CD8-positive, alpha-beta T cell (primary cell): ENCODE measurements at regions of chr6 and their contacts with region 1.

Region 1: GRCh38 chr6:99330159-99330558 is 19.3 kb downstream of the FAXC start:
- DNase-seq: peak; percentile 12 to 72 (median 42)
- ATAC-seq: peak; percentile 64
- H3K4me3 ChIP-seq: no peak overlapping the region
- H3K4me3 Mint-ChIP-seq: no peak overlapping the region
- H3K27ac ChIP-seq: no peak overlapping the region
- H3K27ac Mint-ChIP-seq: no peak overlapping the region
- H3K4me1 ChIP-seq: no peaks in the 10 kb centered on the region
- H3K4me1 Mint-ChIP-seq: peaks cover 2% of the 10 kb centered on the region
- H3K27me3 ChIP-seq: no peaks in the 10 kb centered on the region
- H3K27me3 Mint-ChIP-seq: no peaks in the 10 kb centered on the region
- CTCF ChIP-seq: peak; percentile 85

Region 2: DNA sequence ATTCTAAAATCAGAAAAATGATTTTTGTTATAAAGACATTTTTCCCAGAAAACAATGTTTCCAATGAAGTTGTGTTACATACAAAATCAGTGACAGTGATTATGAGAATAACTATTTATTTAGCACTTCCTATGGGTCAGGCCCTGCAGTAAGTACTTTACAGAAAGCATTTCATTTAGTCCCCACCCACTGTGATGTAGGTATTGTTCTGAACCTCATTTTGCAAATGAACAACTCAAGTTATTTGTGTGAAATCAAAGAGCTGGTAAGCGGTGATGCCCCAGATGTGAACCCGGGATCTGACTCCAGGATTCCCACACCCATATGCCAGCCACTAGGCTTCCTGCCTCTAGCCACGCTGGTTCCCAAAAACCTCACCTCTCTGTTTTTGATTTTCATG is 11.6 kb before region 1 on chr6:
- CTCF ChIA-PET with region 1: interaction called, 22 read pairs
- POLR2A ChIA-PET with region 1: interaction called, 3 read pairs
- intact Hi-C with region 1: no loop called
- DNase-seq: no peak
- ATAC-seq: no peak
- H3K4me3 ChIP-seq: no peak overlapping the region
- H3K4me3 Mint-ChIP-seq: no peak overlapping the region
- H3K27ac ChIP-seq: no peak overlapping the region
- H3K27ac Mint-ChIP-seq: no peak overlapping the region
- H3K4me1 ChIP-seq: no peaks in the 10 kb centered on the region
- H3K4me1 Mint-ChIP-seq: no peaks in the 10 kb centered on the region
- H3K27me3 ChIP-seq: no peaks in the 10 kb centered on the region
- H3K27me3 Mint-ChIP-seq: peaks cover 25% of the 10 kb centered on the region
- CTCF ChIP-seq: no peak

Region 3: GRCh38 chr6:99344289-99344688 is 14.1 kb after region 1 on chr6:
- CTCF ChIA-PET with region 1: interaction called, 16 read pairs
- POLR2A ChIA-PET with region 1: no interaction called
- intact Hi-C with region 1: no loop called
- DNase-seq: no peak
- ATAC-seq: no peak
- H3K4me3 ChIP-seq: no peak overlapping the region
- H3K4me3 Mint-ChIP-seq: no peak overlapping the region
- H3K27ac ChIP-seq: no peak overlapping the region
- H3K27ac Mint-ChIP-seq: no peak overlapping the region
- H3K4me1 ChIP-seq: no peaks in the 10 kb centered on the region
- H3K4me1 Mint-ChIP-seq: peaks cover 2% of the 10 kb centered on the region
- H3K27me3 ChIP-seq: peaks cover 0 to 5% of the 10 kb centered on the region in 2 experiments
- H3K27me3 Mint-ChIP-seq: peaks cover 29% of the 10 kb centered on the region
- CTCF ChIP-seq: no peak

Region 4: DNA sequence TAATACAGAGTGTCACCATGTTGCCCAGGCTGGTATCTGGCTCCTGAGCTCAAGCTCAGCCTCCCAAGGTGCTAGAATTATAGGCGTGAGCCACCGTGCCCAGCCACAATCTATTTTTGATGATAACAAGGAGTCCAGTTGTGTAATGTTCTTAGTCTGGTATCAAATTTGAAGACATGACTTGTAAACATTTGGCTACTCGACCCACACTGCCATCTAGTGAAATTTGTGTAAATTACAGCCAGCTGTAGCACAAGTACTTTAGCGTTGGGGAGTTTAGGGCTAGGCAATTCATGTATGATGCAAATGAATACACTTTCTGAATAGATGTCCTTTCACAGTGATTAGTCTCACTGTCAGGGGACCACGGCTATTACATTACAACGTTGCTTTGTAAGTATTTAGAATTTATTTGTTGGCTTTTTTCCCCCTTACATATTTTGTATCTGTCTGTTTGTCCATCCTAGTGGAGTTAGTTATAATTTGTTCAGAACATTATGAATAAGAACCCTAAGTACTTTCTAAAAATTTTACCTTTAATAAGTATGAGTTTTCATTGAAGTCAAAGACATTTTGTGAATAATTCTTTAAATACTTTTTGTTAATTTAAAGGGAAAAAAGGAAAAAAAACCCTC is 416.2 kb after region 1 on chr6:
- CTCF ChIA-PET with region 1: interaction called, 7 read pairs
- POLR2A ChIA-PET with region 1: no interaction called
- intact Hi-C with region 1: loop called (anchors 5 kb)
- DNase-seq: peak; percentile 19 to 77 (median 49)
- ATAC-seq: peak; percentile 82
- H3K4me3 ChIP-seq: no peak overlapping the region
- H3K4me3 Mint-ChIP-seq: no peak overlapping the region
- H3K27ac ChIP-seq: no peak overlapping the region
- H3K27ac Mint-ChIP-seq: no peak overlapping the region
- H3K4me1 ChIP-seq: no peaks in the 10 kb centered on the region
- H3K4me1 Mint-ChIP-seq: no peaks in the 10 kb centered on the region
- H3K27me3 ChIP-seq: peaks cover 0 to 4% of the 10 kb centered on the region in 2 experiments
- H3K27me3 Mint-ChIP-seq: peaks cover 27% of the 10 kb centered on the region
- CTCF ChIP-seq: peak; percentile 85

Region 5: GRCh38 chr6:99822741-99823512 is 492.8 kb after region 1 on chr6:
- CTCF ChIA-PET with region 1: no interaction called
- POLR2A ChIA-PET with region 1: no interaction called
- intact Hi-C with region 1: loop called in 1 of 2 experiments (anchors 10 kb)
- DNase-seq: peak in 2 of 9 experiments; percentile 43 to 53
- ATAC-seq: peak; percentile 34
- H3K4me3 ChIP-seq: no peak overlapping the region
- H3K4me3 Mint-ChIP-seq: peak overlapping the region; percentile 50
- H3K27ac ChIP-seq: no peak overlapping the region
- H3K27ac Mint-ChIP-seq: no peak overlapping the region
- H3K4me1 ChIP-seq: no peaks in the 10 kb centered on the region
- H3K4me1 Mint-ChIP-seq: peaks cover 7% of the 10 kb centered on the region
- H3K27me3 ChIP-seq: peaks cover 4% of the 10 kb centered on the region in 2 experiments
- H3K27me3 Mint-ChIP-seq: peaks cover 31% of the 10 kb centered on the region
- CTCF ChIP-seq: no peak

Region 6: DNA sequence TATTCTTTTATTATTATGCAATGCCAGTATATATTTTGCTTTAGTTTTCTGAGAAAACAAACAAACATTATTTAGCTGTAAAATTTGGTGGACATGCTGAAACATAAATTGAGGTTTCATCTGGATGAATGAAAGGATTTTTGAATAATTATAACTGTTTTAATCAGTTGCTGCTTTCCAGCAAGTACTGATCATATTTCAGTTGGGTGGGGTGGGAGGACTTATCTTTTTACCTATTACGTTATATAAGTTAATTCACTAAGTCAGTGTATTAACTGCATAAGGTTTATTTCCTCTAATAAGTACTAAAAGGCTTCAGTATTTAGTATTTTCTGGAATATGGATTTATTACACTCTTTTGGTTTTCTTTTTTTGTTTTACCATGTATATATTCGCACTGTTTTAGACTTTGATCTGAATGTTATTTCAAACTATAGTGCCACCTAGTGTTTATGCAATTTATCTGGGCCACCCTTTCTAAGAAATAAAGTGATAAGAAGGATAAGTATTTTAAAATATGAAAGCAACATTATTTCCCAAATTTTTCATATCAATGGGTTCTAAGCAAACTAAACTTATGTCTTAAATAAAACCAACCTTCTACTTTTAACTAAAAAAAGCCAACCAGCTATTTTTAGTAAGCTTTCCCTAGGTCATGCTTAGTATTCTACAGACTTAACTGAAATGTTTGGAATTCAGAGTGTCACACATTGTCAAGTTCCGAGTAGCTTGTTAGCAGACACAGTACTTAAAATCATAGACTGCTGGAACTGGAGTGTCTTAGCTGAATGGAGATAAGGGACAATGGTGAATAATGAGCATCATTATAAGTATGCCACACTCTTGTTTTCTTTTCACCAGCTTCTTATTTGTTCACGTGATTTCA is 769.3 kb after region 1 on chr6:
- CTCF ChIA-PET with region 1: no interaction called
- POLR2A ChIA-PET with region 1: no interaction called
- intact Hi-C with region 1: loop called in 1 of 2 experiments (anchors 10 kb)
- DNase-seq: peak in 1 of 9 experiments; percentile 17
- ATAC-seq: no peak
- H3K4me3 ChIP-seq: no peak overlapping the region
- H3K4me3 Mint-ChIP-seq: no peak overlapping the region
- H3K27ac ChIP-seq: no peak overlapping the region
- H3K27ac Mint-ChIP-seq: no peak overlapping the region
- H3K4me1 ChIP-seq: no peaks in the 10 kb centered on the region
- H3K4me1 Mint-ChIP-seq: no peaks in the 10 kb centered on the region
- H3K27me3 ChIP-seq: no peaks in the 10 kb centered on the region
- H3K27me3 Mint-ChIP-seq: peaks cover 4% of the 10 kb centered on the region
- CTCF ChIP-seq: peak; percentile 12

Region 7: DNA sequence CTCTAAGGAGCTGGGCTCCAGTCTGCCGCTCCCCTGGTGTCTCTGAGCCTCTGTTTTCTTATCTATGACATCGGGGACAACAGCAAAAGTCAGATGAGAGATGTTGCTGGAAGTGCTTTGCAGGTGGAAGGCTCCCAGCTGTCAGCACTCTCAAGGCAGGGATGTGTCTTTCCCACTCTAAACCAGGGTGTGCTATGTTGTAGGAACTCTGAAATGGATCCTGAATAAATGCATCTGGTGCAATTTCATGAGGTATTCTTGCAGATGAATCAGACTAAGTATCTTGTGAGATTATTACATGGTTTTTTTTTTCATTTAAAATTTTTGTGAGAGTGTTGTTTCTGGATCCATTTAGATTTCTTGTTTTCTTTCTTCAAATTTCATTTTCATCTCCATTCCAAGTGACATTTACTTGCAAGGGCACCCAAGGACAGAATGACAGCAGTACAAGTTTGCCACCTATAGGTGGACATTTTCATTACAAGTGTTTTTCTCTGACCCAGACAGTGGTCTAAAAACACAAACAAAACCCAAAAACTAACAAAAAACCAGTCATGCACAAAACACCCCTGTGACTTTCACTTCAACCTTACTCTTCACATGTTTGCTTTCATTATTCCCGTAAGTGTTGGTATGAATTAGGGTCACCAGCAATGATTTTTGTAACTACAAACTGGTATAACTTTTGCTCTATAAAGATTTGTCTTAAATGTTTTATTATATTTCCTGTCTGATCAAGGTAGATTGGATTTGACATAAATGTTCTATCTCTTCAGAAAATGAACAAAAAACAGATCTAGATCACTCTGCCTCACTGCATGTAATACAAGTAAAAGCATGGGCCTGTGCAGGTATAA is 1149.2 kb after region 1 on chr6:
- CTCF ChIA-PET with region 1: no interaction called
- POLR2A ChIA-PET with region 1: no interaction called
- intact Hi-C with region 1: loop called in 1 of 2 experiments (anchors 10 kb)
- DNase-seq: peak in 2 of 9 experiments; percentile 30 to 48
- ATAC-seq: no peak
- H3K4me3 ChIP-seq: no peak overlapping the region
- H3K4me3 Mint-ChIP-seq: no peak overlapping the region
- H3K27ac ChIP-seq: no peak overlapping the region
- H3K27ac Mint-ChIP-seq: no peak overlapping the region
- H3K4me1 ChIP-seq: no peaks in the 10 kb centered on the region
- H3K4me1 Mint-ChIP-seq: no peaks in the 10 kb centered on the region
- H3K27me3 ChIP-seq: no peaks in the 10 kb centered on the region
- H3K27me3 Mint-ChIP-seq: peaks cover 19% of the 10 kb centered on the region
- CTCF ChIP-seq: peak; percentile 51